Psoas muscle (tissue), 8 donors: ENCODE measurements at regions of chr10 and their contacts with region 1.

Region 1: DNA sequence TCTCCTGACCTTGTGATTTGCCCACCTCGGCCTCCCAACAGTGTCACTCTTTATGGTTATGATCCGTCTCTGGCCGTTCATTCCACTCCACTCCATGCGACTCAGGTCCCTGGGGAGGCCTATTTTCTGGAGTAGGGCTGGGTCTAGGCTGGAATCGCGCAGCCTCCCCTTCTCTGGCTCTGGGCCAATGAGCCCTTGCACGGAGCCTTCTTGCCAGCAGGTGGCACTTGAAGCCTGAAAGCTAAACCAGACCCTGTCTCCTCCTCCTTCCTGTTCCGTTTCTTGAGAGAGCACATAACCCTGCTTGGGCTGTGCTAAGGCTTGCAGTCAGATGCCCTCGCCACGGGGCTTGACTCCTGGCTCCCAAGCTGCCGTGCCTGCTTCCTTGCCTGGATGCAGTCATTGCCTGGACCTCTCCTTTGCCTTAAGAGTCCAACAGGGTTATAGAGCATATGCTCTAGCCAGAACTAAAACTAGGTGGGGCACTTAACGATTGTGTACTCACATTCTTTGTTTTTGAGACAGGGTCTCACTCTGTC is 9.6 kb upstream of the DNAJB12 start:
- DNase-seq: peak; percentile 81 to 92
- ATAC-seq: peak; percentile 91 to 95 (median 92)
- H3K4me3 ChIP-seq: peak overlapping the region; percentile 27
- H3K27ac ChIP-seq: peak overlapping the region; percentile 25
- H3K4me1 ChIP-seq: peaks cover 12% of the 10 kb centered on the region
- H3K27me3 ChIP-seq: no peaks in the 10 kb centered on the region
- CTCF ChIP-seq: peak; percentile 93

Region 2: GRCh38 chr10:72419241-72419640 is 54.9 kb after region 1 on chr10:
- intact Hi-C with region 1: no loop called
- DNase-seq: no peak
- ATAC-seq: no peak
- H3K4me3 ChIP-seq: no peak overlapping the region
- H3K27ac ChIP-seq: no peak overlapping the region
- H3K4me1 ChIP-seq: no peaks in the 10 kb centered on the region
- H3K27me3 ChIP-seq: no peaks in the 10 kb centered on the region
- CTCF ChIP-seq: no peak

Region 3: DNA sequence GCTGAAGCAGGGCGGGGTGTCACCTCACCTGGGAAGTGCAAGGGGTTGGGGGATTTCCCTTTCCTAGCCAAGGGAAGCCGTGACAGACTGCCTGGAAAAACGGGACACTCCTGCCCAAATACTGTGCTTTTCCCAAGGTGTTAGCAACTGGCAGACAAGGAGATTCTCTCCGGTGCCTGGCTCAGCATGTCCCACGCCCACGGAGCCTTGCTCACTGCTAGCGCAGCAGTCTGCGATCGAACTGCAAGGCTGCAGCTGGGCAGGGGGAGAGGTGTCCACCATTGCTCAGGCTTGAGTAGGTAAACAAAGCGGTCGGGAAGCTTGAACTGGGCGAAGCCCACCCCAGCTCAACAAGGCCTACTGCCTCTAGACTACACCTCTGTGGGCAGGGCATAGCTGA is 71.3 kb after region 1 on chr10:
- intact Hi-C with region 1: no loop called
- DNase-seq: no peak
- ATAC-seq: no peak
- H3K4me3 ChIP-seq: no peak overlapping the region
- H3K27ac ChIP-seq: no peak overlapping the region
- H3K4me1 ChIP-seq: no peaks in the 10 kb centered on the region
- H3K27me3 ChIP-seq: no peaks in the 10 kb centered on the region
- CTCF ChIP-seq: no peak

Region 4: DNA sequence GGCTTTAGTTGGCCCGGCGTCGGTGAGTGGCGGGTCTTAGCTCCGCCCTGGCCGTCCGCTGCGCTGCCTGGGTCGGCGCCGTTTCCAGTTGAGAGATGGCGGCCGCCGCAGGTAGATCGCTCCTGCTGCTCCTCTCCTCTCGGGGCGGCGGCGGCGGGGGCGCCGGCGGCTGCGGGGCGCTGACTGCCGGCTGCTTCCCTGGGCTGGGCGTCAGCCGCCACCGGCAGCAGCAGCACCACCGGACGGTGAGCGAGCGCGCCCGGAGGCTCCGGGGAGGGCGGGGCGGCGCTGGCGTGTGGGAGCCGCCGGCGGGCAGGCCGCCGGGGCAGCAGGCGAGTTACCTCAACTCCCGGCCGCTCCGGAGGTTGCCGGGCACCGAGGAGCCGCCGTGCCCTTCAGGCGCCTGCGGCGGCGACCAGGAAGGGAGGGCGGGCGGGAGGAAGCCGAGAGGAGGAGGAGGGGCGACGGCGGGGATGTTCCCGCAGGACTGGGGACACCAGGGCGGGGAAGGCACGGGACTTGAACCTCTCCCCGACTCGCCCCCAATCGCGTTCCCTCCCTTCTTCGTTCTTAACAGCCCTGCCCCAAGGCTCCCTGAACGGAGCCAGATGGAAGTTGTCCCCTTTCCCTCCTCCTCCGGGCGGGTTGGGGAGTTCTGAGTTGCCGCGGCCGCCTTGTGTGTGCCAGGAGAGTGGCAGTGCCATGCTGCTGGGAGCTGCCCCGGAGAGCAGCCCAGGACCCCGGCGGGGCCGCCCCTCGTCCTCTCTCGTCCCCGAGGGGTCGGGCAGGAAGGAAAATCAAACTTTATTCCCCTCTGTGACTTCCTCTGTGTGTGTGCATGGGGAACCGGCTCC is 328.0 kb after region 1 on chr10 and contains the start of gene MCU:
- intact Hi-C with region 1: loop called in 1 of 2 experiments (anchors 10 kb)
- DNase-seq: peak; percentile 94 to 97
- ATAC-seq: peak; percentile 90 to 94 (median 92)
- H3K4me3 ChIP-seq: peak within 1 kb of the TSS; percentile 94
- H3K27ac ChIP-seq: peak within 1 kb of the TSS; percentile 93
- H3K4me1 ChIP-seq: peaks cover 50% of the 10 kb centered on the region
- H3K27me3 ChIP-seq: no peaks in the 10 kb centered on the region
- CTCF ChIP-seq: peak; percentile 9
- total RNA-seq, gene MCU: 66.1 to 118 (median 80.1) TPM

Region 5: DNA sequence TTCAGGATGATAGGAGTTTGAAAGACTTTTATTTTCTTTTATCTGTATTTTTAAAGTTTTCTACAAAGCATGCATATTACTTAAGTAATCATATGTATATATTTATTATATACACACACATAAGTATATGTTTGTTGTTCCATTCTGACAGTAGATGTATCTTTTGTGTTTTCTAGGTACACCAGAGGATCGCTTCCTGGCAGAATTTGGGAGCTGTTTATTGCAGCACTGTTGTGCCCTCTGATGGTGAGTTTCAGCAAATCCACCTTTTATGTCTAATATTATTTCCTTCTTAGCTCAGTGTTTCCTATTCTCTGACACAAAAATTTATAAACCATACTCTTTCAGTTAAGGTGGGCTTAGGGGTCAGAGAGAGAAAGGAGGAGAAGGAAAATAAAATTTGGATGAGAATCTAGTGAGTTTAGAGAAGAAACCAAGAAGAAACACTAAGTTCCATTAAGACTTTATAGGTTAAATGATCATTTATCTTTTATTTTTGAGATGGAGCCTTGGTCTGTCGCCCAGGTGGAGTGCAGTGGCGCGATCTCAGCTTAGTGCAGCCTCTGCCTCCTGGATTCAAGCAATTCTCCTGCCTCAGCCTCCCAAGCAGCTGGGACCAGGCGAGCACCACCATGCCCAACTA is 470.0 kb after region 1 on chr10:
- intact Hi-C with region 1: loop called (anchors 5 to 10 kb)
- DNase-seq: no peak
- ATAC-seq: peak; percentile 37 to 86 (median 75)
- H3K4me3 ChIP-seq: no peak overlapping the region
- H3K27ac ChIP-seq: no peak overlapping the region
- H3K4me1 ChIP-seq: peaks cover 27% of the 10 kb centered on the region
- H3K27me3 ChIP-seq: no peaks in the 10 kb centered on the region
- CTCF ChIP-seq: peak; percentile 63

Region 6: DNA sequence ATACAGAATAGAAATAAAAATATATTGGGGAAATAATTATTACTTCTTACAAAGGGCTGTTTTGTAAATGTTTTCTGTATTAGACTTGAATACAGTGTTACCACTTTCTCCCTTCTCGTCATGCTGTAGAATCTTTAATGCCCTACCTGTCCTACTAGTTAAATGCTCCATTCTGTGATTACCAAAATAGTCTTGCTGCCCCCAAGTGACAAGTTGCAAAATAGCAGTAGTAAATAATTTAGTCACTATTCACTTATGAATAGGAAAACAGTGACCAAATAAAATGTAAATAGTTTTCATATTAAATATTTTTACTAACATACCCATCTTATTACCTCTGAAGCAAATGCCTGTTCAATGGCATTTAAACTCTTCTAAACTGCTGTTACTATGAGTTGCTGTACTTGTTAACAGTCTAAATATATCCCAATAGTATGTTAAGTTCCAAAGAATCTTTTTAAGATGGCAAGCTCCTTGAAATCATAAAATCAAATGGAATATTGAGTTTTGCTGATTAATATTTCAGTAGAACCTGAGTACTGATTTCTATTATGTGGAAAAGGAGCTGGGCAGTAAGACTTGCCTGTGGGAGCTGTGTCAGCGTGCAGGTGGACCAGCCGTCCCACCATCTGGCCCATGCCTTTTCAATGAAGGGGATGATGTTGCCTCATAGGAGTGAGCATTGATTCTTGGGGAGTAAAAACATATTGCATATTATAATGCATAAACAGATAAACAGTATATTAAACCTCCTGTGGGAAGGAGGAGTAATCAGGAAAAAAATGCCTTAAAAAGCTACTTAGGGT is 511.1 kb after region 1 on chr10:
- intact Hi-C with region 1: loop called (anchors 5 kb)
- DNase-seq: no peak
- ATAC-seq: peak in 2 of 4 donors; percentile 59 to 73
- H3K4me3 ChIP-seq: no peak overlapping the region
- H3K27ac ChIP-seq: no peak overlapping the region
- H3K4me1 ChIP-seq: no peaks in the 10 kb centered on the region
- H3K27me3 ChIP-seq: no peaks in the 10 kb centered on the region
- CTCF ChIP-seq: peak; percentile 49

Region 7: DNA sequence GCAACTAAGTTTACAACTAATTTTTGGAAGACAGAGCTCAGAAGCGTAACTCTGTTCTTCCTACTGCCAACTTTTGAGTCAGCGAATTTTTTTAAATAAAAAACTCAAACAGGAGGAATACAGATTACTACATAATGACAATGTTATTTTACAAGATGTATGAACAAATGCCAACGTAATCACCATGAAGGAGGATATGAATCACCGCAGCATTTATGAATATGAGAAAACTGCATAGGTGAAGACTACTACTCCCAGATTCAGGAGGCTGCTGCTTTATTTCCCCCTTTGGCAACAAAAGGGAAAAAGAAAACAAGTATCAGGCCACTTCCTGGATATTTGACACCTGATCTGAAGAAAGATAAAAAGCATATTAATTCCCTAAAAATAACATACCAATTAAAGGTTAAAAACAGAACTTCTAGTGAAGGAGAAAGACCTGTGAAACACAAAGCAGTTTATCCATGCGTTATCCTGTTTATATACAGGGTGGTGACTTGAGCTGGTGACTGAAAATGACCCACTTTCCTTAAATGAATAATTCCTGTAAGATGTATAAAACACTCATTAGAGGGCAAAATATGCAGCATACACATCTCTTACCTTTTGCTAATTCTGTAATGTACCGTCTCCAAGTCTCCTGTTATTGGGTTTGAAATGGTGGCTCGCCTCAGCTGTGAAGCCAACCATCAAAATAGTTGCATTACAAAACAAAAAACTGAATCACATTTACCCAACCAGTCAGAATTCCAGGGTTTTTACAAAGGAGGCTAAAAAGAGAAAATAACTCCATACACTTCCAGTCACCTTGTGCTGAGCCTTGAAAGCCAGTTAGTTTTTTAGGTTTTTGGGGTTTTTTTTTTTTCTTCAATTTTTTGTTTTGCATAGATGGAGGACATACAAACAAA is 680.3 kb after region 1 on chr10:
- intact Hi-C with region 1: loop called in 1 of 2 experiments (anchors 10 kb)
- DNase-seq: no peak
- ATAC-seq: peak in 1 of 4 donors; percentile 26
- H3K4me3 ChIP-seq: no peak overlapping the region
- H3K27ac ChIP-seq: peak overlapping the region; percentile 42
- H3K4me1 ChIP-seq: peaks cover 4% of the 10 kb centered on the region
- H3K27me3 ChIP-seq: no peaks in the 10 kb centered on the region
- CTCF ChIP-seq: no peak

Region 8: DNA sequence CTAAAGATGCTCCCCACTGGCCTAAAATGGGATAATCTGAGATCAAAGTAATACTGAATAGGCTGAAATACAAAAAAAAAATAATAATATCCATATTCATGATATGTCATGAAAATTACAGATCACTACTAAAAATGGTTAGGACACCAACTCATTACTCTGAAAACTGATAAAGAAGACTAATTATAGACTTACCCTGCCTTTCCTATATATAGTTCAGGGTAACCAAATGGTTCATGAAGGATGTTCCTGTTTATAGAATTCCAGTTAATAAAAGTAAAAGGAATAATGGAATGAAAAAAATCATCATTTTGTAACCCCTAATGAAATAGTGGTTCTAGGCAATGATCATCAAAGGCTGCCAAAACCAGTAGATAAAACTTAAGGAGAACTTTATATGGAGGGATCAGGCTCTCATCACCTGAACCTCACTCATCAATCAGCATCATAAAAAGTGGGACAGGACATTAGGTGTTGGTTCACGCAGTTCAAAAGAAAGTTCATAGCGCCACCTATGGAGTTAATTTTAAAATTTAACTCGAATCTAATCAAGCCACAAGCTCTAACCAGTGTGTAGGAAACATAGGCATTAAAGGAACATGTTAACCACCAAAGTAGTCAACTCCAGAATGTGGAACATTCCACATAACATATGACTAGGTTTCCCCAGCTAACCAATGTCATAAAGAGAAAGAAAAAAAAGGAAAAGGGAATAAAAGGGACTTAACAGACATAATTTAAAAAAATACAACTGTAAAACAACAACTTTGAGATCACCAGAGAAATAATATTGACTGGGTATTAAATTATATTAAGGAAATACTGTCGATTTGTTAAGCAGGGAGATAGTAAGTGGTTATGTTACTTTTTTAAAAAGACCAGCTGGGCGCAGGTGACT is 696.7 kb after region 1 on chr10:
- intact Hi-C with region 1: loop called in 1 of 2 experiments (anchors 2 kb)
- DNase-seq: no peak
- ATAC-seq: peak; percentile 16 to 60 (median 48)
- H3K4me3 ChIP-seq: no peak overlapping the region
- H3K27ac ChIP-seq: peak overlapping the region; percentile 42
- H3K4me1 ChIP-seq: peaks cover 7% of the 10 kb centered on the region
- H3K27me3 ChIP-seq: no peaks in the 10 kb centered on the region
- CTCF ChIP-seq: peak; percentile 33

Region 9: DNA sequence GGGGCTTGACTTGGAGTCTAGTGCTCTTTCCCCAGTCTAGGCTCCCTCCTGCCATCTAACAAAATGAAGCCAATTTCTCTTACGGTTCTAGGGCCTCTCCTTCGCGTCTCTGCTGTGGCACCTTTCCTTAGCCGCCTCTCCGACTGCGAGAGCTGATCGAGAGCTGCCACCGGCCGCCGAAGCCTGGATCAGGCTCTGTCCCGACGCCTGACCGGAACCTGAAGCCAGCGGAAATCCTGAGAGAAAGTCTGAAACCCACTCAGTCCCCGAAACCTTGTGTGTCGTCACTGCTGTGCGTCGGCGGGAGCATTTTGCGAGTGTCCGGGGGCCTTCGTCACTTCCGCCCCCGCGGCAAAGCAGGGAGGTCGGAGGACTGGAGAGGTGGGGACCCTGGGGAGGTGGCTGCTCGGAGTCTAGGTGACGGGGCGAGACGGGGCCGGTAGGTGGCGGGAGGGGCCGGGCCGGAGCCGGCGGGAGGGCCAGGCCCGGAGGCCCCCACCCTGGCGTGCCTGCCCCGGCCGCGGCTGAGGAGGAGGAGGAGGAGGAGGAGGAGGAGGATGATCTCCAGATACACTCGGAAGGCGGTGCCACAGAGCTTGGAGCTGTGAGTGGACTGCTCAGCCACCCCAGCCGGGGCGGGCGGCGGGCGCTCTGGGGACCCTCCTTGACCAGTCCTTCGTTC is 803.6 kb after region 1 on chr10 and contains the starts of genes ECD and FAM149B1:
- intact Hi-C with region 1: loop called in 1 of 2 experiments (anchors 10 kb)
- DNase-seq: peak; percentile 95 to 97
- ATAC-seq: peak; percentile 98 to 99 (median 98)
- H3K4me3 ChIP-seq: peak within 1 kb of the TSS; percentile 98
- H3K27ac ChIP-seq: peak within 1 kb of the TSS; percentile 99
- H3K4me1 ChIP-seq: peaks cover 33% of the 10 kb centered on the region
- H3K27me3 ChIP-seq: no peaks in the 10 kb centered on the region
- CTCF ChIP-seq: peak; percentile 14
- total RNA-seq, gene ECD: 12.2 to 17.1 (median 15.0) TPM
- total RNA-seq, gene FAM149B1: 8.9 to 18.1 (median 11.8) TPM